ENCODE measurements at regions of chr15 and their contacts with region 1.

Region 1: GRCh38 chr15:31128919-31129768 is 27.6 kb upstream of the TRPM1 start:
- DNase-seq: peak; percentile 78
- H3K4me3 ChIP-seq: no peak overlapping the region
- H3K27ac ChIP-seq: no peak overlapping the region
- H3K4me1 ChIP-seq: peaks cover 4% of the 10 kb centered on the region
- H3K27me3 ChIP-seq: peaks cover 0 to 3% of the 10 kb centered on the region in 2 experiments
- CTCF ChIP-seq: peak; percentile 93 to 96
- POLR2A ChIP-seq: no peak

Region 2: GRCh38 chr15:30903497-30904201 is 225.5 kb before region 1 on chr15 and contains the start of gene FAN1:
- CTCF ChIA-PET with region 1: interaction called, 37 read pairs
- POLR2A ChIA-PET with region 1: no interaction called
- dilution Hi-C with region 1: no loop called
- intact Hi-C with region 1: no loop called
- DNase-seq: peak; percentile 90
- H3K4me3 ChIP-seq: peak within 1 kb of the TSS; percentile 1 to 87 (median 80)
- H3K27ac ChIP-seq: no peak within 1 kb of the TSS
- H3K4me1 ChIP-seq: peaks cover 7% of the 10 kb centered on the region
- H3K27me3 ChIP-seq: peaks cover 0 to 2% of the 10 kb centered on the region in 2 experiments
- CTCF ChIP-seq: no peak
- POLR2A ChIP-seq: peak; percentile 74
- total RNA-seq, gene FAN1: 11.7 and 12.0 TPM in 2 replicates

Region 3: DNA sequence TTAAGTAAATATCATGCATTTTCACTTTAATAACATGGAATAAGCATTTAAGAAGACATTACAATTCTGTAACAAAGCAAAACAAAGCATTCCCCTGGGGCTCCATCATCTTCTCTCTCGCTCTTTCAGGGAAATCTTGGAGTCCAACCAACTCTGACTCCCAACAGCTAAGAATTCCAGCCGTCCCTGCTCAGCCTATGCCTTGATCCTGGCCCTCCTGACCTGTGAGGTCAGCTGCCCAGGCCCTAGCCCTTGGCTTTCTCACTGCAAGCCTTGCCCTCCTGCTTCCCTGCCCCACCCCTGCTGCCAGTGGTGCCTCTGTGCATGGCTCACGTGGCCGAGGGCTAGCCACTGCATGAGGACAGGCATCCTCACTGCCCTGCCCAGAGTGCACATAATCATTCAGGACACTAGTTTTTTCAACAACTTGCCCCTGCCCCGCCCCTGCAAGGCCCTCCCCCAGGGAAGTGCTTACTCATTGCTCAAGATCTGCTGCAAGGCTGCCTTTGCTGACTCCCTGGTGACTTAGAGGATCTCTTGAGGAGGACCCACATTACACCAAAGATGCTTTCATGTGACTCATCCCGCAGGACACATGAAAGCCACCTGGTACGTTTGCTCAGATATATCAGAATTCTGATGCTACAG is 175.3 kb before region 1 on chr15:
- CTCF ChIA-PET with region 1: interaction called, 129 read pairs
- POLR2A ChIA-PET with region 1: no interaction called
- dilution Hi-C with region 1: no loop called
- intact Hi-C with region 1: no loop called
- DNase-seq: peak; percentile 37
- H3K4me3 ChIP-seq: no peak overlapping the region
- H3K27ac ChIP-seq: peak overlapping the region; percentile 10
- H3K4me1 ChIP-seq: peaks cover 16% of the 10 kb centered on the region
- H3K27me3 ChIP-seq: no peaks in the 10 kb centered on the region
- CTCF ChIP-seq: no peak
- POLR2A ChIP-seq: no peak

Region 4: GRCh38 chr15:31013538-31014228 is 115.5 kb before region 1 on chr15:
- CTCF ChIA-PET with region 1: interaction called, 12 read pairs
- POLR2A ChIA-PET with region 1: no interaction called
- dilution Hi-C with region 1: no loop called
- intact Hi-C with region 1: no loop called
- DNase-seq: peak; percentile 20
- H3K4me3 ChIP-seq: no peak overlapping the region
- H3K27ac ChIP-seq: no peak overlapping the region
- H3K4me1 ChIP-seq: no peaks in the 10 kb centered on the region
- H3K27me3 ChIP-seq: no peaks in the 10 kb centered on the region
- CTCF ChIP-seq: no peak
- POLR2A ChIP-seq: no peak

Region 5: GRCh38 chr15:31111091-31111647 is 18.0 kb before region 1 on chr15:
- CTCF ChIA-PET with region 1: interaction called, 17 read pairs
- POLR2A ChIA-PET with region 1: no interaction called
- dilution Hi-C with region 1: no loop called
- intact Hi-C with region 1: no loop called
- DNase-seq: no peak
- H3K4me3 ChIP-seq: no peak overlapping the region
- H3K27ac ChIP-seq: no peak overlapping the region
- H3K4me1 ChIP-seq: no peaks in the 10 kb centered on the region
- H3K27me3 ChIP-seq: peaks cover 2 to 4% of the 10 kb centered on the region in 2 experiments
- CTCF ChIP-seq: no peak
- POLR2A ChIP-seq: no peak

Region 6: DNA sequence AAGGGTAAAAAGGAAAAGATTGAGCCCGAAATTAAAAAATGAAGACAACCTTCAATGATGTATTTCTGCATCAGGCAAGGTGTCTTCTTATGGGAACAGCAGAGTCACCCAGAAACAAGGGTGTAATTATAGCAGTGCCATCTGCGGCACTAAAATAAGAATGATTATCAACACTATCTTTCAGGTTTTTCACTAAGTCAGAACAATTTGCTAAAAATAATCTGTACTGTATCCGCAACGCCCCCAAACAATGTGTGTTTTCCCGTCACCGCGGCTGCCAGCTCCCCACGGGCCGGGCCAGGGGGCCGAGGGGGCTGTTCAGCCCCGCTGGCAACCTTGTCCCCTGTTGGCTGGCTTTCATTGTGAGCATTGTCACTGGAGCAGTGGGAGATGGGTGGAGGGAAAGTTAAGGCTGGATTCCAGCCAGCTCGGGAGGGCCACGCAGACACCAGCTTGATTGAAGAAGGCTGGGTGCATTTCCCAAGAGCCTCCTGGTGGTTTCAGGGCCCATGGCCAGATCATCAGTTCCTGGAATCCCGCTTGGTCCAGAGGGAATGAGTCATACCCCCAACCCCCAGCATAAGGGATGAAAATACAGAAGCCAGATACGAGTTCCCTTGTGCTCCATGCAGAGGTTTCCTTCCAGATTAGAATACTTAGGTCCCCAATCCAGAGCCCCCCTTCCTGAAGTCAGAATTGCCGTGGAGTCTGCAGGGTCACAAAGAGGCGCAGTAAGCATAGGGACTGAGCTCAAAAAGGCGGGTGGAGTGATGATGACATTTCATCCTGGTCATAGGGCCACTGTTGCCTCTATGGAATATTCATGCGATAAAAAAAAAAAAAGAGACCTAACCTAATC is 107.3 kb after region 1 on chr15:
- CTCF ChIA-PET with region 1: no interaction called
- POLR2A ChIA-PET with region 1: no interaction called
- dilution Hi-C with region 1: no loop called
- intact Hi-C with region 1: no loop called
- DNase-seq: peak; percentile 81
- H3K4me3 ChIP-seq: no peak overlapping the region
- H3K27ac ChIP-seq: no peak overlapping the region
- H3K4me1 ChIP-seq: no peaks in the 10 kb centered on the region
- H3K27me3 ChIP-seq: no peaks in the 10 kb centered on the region
- CTCF ChIP-seq: peak in 1 of 2 donors; percentile 4
- POLR2A ChIP-seq: no peak

Measured in endothelial cell of umbilical vein (primary cell).